Left colon (tissue), 2 donors: ENCODE measurements at regions of chr12 and their contacts with region 1.

Region 1: DNA sequence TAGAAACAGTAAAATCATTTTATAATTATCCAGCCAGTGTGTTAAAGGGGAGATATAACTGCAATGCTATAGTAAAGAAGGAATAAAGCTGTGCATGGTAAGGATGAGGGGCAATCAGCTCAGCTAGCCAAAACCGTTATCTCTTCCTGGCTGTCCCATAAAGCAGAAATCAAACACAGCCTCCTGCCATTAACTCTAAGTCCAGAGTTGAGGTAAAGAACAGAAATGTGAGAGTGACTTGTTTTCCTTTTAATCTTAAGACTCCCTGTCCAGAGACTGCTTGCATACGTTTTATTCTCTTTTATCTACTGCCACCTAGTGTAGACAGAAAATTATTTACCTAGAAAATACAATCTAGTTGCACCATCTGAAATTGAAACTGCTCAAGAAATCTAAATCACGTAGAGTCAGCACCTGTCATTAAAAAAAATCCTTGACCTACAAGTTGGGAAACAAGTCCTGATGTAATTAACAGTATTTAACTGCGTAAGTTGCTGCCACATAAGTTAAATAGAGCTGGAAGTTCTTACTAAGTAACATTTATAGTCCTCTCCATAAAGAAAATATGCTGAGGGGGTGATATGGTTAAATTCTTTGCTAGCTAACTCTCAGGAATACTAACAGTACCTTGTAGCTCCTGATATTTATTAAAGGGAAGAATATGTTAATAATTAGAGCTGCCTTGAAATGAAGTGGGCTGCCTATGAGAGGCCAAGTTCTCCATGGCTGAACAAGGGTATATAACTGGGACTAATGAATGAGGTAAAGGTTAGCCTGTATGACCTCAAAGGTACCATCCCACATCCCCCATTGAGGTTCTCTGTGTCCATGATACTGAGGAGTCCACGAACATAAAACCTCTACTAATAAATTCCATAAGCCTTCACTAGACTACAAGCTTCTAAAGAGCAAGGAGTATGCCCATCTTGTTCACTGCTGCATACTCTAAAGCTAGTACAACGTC is 62.7 kb downstream of the GALNT4 start:
- DNase-seq: no peak
- ATAC-seq: peak; percentile 85

Region 2: DNA sequence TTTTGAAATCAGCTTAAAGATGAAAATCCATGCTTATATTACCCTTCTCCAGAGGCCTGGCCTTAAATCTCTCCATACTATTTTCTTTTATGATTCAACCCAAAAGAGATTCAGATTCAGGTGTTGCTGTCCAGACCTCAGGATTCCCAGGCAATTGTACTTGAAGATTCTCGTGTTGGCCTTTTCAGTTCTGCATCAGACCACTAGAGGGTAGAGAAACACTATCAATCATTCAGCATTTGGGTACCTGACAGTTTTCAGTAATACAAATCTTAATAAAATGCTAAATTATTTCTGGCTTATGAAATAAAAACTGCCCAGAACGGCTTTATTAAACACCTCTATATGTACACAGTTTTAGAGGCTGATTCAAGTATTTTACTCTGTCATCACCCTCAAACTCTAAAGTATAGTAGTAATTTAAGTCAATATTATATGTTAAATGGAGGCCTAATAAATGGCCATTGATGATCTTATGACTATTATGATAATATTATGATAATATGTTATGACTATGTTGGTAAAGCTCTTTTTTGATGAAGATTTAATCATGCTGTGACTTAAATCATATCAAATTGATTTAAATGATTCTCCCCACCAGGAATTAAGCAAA is 410.8 kb before region 1 on chr12:
- intact Hi-C with region 1: loop called (anchors 2 to 10 kb)
- DNase-seq: no peak
- ATAC-seq: peak; percentile 79